Ascending aorta (tissue), 2 donors: ENCODE measurements at regions of chr7 and their contacts with region 1.

Region 1: DNA sequence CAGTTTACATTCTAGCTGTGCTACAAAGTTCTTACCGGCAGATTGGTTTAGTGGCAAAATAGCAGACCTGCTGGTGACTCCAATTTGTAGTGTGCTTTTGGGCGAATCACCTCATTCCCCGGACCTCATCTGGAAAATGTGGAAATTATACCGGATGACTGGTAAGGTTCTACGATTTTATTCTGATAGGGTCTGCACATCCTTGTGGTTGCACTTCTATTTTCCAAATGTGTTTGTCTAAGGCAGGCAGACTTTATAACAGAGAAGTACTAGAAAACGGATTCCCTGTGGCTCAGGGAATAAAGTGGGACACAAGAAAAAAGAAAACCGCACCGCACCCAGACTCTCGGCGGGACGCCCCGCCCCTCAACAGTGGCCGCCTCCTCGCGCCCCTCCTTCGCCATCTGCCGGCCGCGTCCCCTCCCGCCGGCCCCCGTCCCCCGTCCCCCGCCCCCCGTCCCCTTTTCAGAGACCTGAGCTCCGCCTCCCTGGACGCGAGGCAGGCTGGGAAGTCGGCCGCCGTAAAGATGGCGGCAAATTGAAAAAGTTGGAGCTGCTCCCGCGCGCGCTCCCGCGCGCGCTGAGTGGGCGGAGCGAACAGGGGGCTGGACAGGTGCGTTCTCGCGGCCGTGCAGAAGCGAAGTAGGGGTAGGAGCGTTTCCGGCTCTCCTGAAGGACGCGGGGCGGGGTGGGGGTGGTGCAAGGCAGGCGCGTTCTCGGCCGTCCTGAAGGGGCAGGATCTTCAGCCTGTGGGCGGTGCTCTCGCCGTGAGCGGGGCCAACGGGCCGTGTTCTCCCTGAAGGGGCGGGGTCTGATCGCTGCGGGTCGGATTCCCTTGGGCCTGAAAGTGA is 531 bp upstream of the CCM2 start:
- DNase-seq: peak; percentile 98 to 100
- H3K4me3 ChIP-seq: peak overlapping the region; percentile 87 to 96
- H3K27ac ChIP-seq: peak overlapping the region; percentile 78 to 96
- H3K4me1 ChIP-seq: peaks cover 0 to 18% of the 10 kb centered on the region in 2 donors
- H3K27me3 ChIP-seq: no peaks in the 10 kb centered on the region
- CTCF ChIP-seq: peak in 1 of 3 experiments; percentile 26

Region 2: DNA sequence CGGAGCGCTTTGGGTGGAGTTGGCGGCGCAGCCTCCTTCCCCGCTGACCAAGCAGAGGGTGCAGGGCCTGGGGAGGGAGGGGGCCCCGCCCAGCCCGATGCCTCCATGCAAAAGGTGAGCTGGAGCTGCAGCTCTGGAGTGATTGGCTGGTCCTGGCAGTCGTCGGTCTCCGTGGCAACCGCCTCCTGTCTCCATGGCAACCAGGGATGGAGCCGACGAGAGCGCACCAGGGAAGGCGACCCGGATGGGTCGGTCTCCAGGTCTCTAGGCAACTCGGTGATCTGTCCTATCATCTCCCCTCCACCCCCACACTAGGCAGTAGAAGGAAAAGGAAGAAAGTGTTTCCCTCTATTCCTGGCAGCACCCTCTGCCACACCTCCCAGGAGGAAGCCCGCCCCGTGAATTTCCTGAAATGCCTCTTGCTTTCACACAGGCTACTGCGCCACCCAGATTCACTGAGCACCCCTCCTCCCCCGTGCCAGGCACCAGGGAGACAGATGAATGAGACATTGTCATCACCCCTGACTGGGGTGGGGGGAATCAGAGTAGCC is 89.9 kb after region 1 on chr7:
- intact Hi-C with region 1: loop called (anchors 2 kb)
- DNase-seq: peak in 1 of 2 donors; percentile 83
- H3K4me3 ChIP-seq: peak overlapping the region; percentile 80 to 91
- H3K27ac ChIP-seq: peak overlapping the region; percentile 89 to 92
- H3K4me1 ChIP-seq: peaks cover 3 to 11% of the 10 kb centered on the region in 2 donors
- H3K27me3 ChIP-seq: no peaks in the 10 kb centered on the region
- CTCF ChIP-seq: no peak

Region 3: GRCh38 chr7:45157653-45158401 is 158.4 kb after region 1 on chr7 and contains the start of gene RAMP3:
- intact Hi-C with region 1: no loop called
- DNase-seq: no peak
- H3K4me3 ChIP-seq: peak within 1 kb of the TSS; percentile 23 to 33
- H3K27ac ChIP-seq: peak within 1 kb of the TSS in 1 of 2 donors; percentile 40
- H3K4me1 ChIP-seq: peaks cover 0 to 5% of the 10 kb centered on the region in 2 donors
- H3K27me3 ChIP-seq: no peaks in the 10 kb centered on the region
- CTCF ChIP-seq: no peak
- total RNA-seq, gene RAMP3: 586 TPM

Region 4: GRCh38 chr7:45239486-45239885 is 240.0 kb after region 1 on chr7:
- intact Hi-C with region 1: no loop called
- DNase-seq: no peak
- H3K4me3 ChIP-seq: no peak overlapping the region
- H3K27ac ChIP-seq: peak overlapping the region in 1 of 2 donors; percentile 19
- H3K4me1 ChIP-seq: no peaks in the 10 kb centered on the region
- H3K27me3 ChIP-seq: no peaks in the 10 kb centered on the region
- CTCF ChIP-seq: no peak